Left lung (tissue), 14 donors: ENCODE measurements at regions of chr1 and their contacts with region 1.

Region 1: DNA sequence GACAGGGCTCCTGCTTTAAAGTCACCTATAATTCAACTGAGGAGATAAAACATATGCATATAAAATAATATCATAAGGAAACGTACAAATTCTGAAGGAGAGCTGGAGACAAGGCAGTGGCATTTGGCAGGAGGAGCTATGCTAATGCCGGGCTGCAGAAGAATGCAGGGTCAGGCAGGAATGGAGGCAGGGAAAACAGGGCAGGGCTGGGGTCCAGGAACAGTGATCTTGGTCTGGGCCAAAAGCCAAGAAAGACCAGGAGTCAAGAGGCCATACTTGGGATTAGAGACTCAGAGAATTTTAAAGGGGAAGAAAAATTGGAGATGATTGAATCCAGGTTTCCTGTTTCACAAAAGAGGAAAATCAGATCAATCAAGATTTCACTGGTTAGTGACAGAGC is 20.0 kb upstream of the BRDT start:
- DNase-seq: peak in 1 of 4 donors; percentile 30
- ATAC-seq: peak; percentile 73
- H3K4me3 ChIP-seq: no peak overlapping the region
- H3K27ac ChIP-seq: no peak overlapping the region
- H3K4me1 ChIP-seq: peaks cover 0 to 6% of the 10 kb centered on the region in 2 donors
- H3K27me3 ChIP-seq: no peaks in the 10 kb centered on the region
- CTCF ChIP-seq: no peak

Region 2: DNA sequence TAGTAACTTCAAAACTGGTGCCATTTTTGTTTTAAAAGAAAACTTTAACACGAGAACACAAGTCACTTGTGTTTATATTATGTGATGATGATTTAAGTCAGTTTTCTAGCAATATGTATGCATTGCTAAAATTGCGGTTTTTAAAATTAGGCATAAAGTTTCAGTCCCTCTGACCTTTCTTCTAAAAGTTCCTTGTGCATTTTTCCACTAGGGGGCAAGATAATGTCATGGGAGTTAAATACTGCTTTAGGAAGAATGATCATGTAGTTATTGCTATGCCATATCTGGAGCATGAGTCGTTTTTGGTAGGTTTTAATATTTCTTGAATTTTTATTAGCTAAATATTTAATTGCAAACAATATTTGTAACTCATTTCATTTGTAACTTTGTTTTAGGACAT is 417.9 kb before region 1 on chr1:
- intact Hi-C with region 1: loop called in 1 of 2 experiments (anchors 5 kb)
- DNase-seq: peak in 2 of 4 donors; percentile 42 to 58
- ATAC-seq: peak; percentile 60
- H3K4me3 ChIP-seq: no peak overlapping the region
- H3K27ac ChIP-seq: no peak overlapping the region
- H3K4me1 ChIP-seq: peaks cover 0 to 9% of the 10 kb centered on the region in 2 donors
- H3K27me3 ChIP-seq: no peaks in the 10 kb centered on the region
- CTCF ChIP-seq: peak; percentile 54 to 59

Region 3: DNA sequence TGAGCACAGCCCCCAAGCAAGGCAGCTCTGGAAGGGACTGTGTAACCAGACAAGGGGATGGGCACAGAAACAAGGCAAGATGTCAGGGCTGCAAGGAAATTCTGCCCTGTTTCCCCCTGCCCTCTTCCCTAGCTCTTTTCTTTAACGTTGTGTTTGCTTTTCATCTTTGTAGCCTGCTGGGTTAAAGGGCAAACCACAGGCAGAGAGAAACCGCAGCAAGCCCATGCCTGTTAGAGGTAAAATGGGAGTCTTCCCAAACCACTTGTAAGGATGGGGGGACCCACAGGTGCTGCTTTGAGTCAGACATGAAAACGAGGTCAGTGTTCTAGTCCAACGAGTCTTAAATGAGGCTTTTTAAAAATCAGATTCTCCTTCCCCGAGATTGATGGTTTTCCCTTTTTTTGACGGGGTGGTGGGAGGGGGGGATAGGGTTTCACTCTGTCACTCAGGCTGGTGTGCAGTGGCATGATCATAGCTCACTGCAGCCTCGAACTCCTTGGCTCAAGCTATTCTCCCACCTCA is 56.6 kb before region 1 on chr1:
- intact Hi-C with region 1: no loop called
- DNase-seq: no peak
- ATAC-seq: no peak
- H3K4me3 ChIP-seq: no peak overlapping the region
- H3K27ac ChIP-seq: no peak overlapping the region
- H3K4me1 ChIP-seq: peaks cover 0 to 9% of the 10 kb centered on the region in 2 donors
- H3K27me3 ChIP-seq: no peaks in the 10 kb centered on the region
- CTCF ChIP-seq: no peak